ENCODE measurements at regions of chr1 and their contacts with region 1.

Region 1: GRCh38 chr1:160951443-160952128 is 3.0 kb downstream of the ITLN2 start:
- DNase-seq: peak in 3 of 5 donors; percentile 17 to 51 (median 41)
- ATAC-seq: peak; percentile 55 to 77 (median 69)
- H3K4me3 ChIP-seq: no peak overlapping the region
- H3K27ac ChIP-seq: no peak overlapping the region
- H3K4me1 ChIP-seq: peaks cover 0 to 26% (median 0%) of the 10 kb centered on the region in 12 donors
- H3K27me3 ChIP-seq: peaks cover 0 to 18% (median 0%) of the 10 kb centered on the region in 9 donors
- CTCF ChIP-seq: peak; percentile 40 to 74 (median 58)
- POLR2A ChIP-seq: no peak

Region 2: DNA sequence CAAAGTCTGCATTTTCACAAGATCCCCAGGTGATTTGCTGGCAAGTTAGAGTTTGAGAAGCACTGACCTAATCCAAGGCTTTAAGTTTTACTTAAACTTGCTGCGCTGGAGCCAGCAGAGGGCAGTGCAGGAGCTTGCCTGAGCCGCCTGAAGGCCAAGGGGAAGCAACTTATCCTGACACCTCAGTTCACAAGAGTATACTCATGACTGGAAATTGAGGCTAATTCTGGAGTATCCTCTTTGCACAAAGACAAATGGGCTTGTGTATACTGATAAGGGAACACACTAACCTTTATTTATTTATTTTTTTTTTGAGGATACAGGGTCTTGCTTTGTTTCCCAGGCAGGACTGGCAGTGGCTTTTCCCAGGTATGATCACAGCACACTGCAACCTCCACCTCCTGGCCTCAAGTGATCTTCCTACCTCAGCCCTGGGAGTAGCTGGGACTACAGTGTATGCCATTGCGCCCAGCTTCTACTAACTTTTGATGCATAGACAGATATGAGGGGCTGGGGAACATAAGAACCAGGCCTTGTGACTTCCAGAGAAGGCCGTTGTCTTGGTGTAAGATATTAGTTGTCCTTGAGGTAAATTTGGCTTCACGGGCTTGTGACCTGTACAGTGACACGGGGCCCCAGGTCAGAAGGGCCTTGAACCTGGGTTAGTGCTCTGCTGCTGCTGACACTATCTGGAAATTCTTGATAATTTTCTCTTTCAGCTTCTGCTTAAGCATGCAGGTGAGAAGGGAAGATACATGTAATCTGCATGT is 275.8 kb before region 1 on chr1:
- intact Hi-C with region 1: loop called in 2 of 10 experiments (anchors 5 to 10 kb)
- DNase-seq: peak; percentile 57 to 83 (median 72)
- ATAC-seq: peak; percentile 69 to 85 (median 82)
- H3K4me3 ChIP-seq: no peak overlapping the region
- H3K27ac ChIP-seq: no peak overlapping the region
- H3K4me1 ChIP-seq: peaks cover 0 to 46% (median 0%) of the 10 kb centered on the region in 12 donors
- H3K27me3 ChIP-seq: peaks cover 0 to 15% (median 0%) of the 10 kb centered on the region in 9 donors
- CTCF ChIP-seq: peak; percentile 57 to 82 (median 76)
- POLR2A ChIP-seq: no peak

Region 3: DNA sequence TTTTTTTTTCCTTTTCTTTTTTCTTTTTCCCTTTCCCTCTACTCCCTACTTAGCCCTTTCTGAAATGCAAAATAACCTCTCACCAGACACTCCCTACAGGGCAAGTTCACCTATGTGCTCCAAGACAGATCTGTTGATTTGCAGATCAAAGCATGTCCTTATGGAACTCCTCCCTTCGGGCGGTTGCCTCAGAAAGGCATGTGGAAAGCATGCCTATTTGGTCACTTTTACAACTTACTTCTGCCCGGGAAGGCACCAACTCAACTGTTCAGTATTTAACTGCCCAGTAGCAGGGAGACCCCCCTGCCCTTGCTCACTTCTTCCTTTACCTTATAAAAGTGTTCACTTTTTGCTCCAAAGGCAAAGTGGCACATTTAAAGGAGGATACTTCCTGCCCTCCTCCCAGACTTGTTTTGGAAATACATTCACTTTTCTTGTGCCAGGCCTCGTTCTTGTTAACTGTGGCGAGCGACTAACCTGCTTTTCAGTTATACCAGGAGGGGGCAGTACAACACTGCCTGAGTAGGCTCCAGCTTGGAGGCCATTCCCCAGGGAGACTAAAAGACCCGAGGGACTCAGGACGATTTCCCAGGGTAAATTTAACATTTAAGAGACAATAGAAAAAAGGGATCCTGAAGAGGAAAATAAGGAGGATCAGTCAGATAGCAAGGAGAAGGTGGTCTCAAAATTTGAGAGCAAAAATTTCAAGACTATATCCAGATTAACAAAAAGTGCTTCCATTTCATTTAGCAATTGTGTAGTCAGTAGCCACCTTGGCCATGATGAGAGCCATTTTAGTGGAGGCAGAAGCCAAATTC is 224.9 kb before region 1 on chr1:
- intact Hi-C with region 1: loop called in 7 of 10 experiments (anchors 2 to 10 kb)
- DNase-seq: peak in 4 of 5 donors; percentile 34 to 56 (median 47)
- ATAC-seq: peak; percentile 67 to 81 (median 72)
- H3K4me3 ChIP-seq: no peak overlapping the region
- H3K27ac ChIP-seq: peak overlapping the region in 1 of 12 donors; percentile 43
- H3K4me1 ChIP-seq: peaks cover 0 to 30% (median 0%) of the 10 kb centered on the region in 12 donors
- H3K27me3 ChIP-seq: peaks cover 0 to 6% (median 0%) of the 10 kb centered on the region in 9 donors
- CTCF ChIP-seq: peak; percentile 56 to 84 (median 69)
- POLR2A ChIP-seq: no peak

Region 4: GRCh38 chr1:160837558-160838205 is 113.9 kb before region 1 on chr1:
- intact Hi-C with region 1: loop called (anchors 1 to 5 kb)
- DNase-seq: peak; percentile 18 to 82 (median 35)
- ATAC-seq: peak in 2 of 4 donors; percentile 48 to 77
- H3K4me3 ChIP-seq: no peak overlapping the region
- H3K27ac ChIP-seq: peak overlapping the region in 2 of 12 donors; percentile 7 to 80
- H3K4me1 ChIP-seq: peaks cover 0 to 38% (median 0%) of the 10 kb centered on the region in 12 donors
- H3K27me3 ChIP-seq: peaks cover 0 to 4% (median 0%) of the 10 kb centered on the region in 9 donors
- CTCF ChIP-seq: peak in 1 of 12 donors; percentile 17
- POLR2A ChIP-seq: no peak

Region 5: DNA sequence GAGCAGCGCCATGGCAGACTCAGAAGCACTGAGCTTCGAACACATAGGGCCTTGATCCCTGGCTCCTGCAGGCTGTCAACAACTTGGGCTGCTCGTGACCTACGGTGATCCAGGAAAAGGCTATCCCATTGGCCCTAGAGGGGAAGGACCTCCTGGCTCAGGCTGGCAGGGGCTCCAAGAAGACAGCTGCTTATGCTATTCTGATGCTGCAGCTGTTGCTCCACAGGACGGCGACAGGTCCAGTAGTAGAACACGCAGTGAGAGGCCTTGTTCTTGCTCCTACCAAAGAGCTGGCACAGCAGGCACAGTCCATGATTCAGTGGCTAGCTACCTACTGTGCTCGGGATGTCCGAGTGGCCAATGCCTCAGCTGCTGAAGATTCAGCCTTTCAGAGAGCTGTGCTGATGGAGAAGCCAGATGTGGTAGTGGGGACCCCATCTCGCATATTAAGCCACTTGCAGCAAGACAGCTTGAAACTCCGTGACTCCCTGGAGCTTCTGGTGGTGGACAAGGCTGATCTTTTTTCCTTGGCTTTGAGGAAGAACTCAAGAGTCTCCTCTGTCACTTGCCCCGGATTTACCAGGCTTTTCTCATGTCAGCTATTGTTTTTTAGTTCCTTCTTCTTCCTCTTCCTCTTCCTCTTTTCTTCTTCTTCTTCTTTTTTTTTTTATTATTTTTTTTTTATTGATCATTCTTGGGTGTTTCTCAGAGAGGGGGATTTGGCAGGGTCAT is 15.9 kb before region 1 on chr1:
- intact Hi-C with region 1: no loop called
- DNase-seq: no peak
- ATAC-seq: no peak
- H3K4me3 ChIP-seq: no peak overlapping the region
- H3K27ac ChIP-seq: peak overlapping the region in 1 of 12 donors; percentile 68
- H3K4me1 ChIP-seq: no peaks in the 10 kb centered on the region
- H3K27me3 ChIP-seq: no peaks in the 10 kb centered on the region
- CTCF ChIP-seq: no peak
- POLR2A ChIP-seq: no peak